ENCODE measurements at regions of chr5 and their contacts with region 1.

Region 1: DNA sequence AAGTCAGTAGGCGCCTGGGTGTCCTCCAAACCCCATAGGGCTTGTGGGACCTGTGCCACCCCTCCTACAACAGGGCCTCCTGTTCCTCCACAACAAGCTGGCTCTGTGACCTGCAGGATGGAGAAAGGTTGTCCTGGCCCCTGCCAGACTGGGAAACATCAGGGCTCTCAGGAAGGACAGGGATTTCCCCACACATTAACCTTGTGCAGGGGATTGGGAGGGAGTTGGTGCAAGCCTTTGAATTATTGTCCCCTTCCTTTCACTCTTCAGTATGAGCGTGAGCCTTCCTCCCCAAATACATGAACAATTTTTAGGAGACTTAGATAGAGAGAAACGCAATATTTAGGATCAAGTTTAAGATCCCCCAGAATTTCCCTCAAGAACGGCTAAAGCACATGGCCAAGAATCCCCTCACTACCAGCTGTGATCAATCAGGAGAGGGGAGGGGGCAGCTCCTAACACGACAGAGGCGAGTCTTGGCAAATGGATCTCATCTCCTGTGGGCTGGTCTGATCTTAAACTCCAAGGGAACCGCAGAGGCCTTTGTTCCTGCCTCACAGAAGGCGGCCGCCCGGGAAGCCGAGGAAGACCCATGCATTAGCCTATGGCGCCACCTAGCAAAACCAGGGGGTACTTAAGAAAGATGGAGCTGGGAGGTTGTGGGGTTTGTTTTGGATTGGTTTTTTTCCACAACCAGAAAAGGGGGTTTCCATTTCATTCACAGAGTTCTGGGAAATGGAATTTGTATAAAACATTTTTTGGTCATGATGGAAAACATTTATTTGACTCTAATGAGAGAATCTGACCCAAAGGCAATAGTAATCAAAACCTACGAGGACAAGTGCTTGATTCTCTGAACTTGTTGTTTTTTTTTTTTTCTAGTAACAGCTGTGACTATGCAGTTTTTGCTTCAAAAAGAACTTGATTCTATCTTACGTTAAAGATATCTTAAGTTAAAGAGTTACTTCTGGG is 36.1 kb upstream of the OSMR start:
- DNase-seq: peak; percentile 79 to 93 (median 87)
- H3K4me3 ChIP-seq: no peak overlapping the region
- H3K27ac ChIP-seq: peak overlapping the region in 3 of 5 donors; percentile 43 to 63 (median 54)
- H3K4me1 ChIP-seq: peaks cover 4 to 37% of the 10 kb centered on the region in 2 donors
- H3K27me3 ChIP-seq: no peaks in the 10 kb centered on the region
- CTCF ChIP-seq: peak; percentile 69 to 93 (median 86)
- POLR2A ChIP-seq: no peak

Region 2: DNA sequence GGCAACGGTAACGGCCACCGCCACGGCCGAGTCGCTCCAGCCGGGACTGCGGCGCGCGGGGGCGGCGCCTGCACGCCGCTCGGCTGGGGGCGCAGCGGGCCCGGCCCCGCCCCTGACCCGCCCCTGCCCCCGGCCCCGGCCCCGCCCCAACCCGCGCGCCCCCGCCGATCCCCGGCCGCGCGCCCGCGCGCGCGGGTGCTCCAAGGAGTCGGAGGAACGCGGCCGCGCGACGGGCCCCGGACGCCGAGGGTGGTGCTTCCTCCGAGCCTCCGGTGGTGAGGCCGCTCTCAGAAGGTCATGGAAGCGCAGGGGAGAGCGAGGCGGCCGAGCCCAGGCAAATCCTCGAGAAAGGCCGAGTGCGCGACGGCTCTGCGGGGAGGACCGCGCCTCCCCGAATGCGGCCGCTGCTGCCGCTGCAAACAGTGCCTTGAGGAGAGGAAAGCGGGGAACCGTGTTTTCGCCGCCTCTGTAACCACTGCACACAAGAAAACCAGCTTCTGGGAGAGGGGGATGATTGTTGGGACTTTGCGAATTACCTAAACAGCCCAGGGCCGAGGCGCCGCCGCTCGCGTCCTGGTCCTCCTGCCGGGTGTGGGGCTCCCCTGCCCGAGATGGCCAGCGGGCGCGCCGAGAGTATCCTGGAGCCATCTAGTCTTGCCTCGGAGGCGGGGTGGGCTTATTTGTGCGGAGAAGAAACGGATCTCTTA is 252.9 kb before region 1 on chr5 and contains the start of gene LIFR:
- intact Hi-C with region 1: loop called in 1 of 2 experiments (anchors 10 kb)
- DNase-seq: peak; percentile 85 to 90 (median 86)
- H3K4me3 ChIP-seq: peak within 1 kb of the TSS; percentile 16 to 97 (median 76)
- H3K27ac ChIP-seq: peak within 1 kb of the TSS; percentile 18 to 98 (median 92)
- H3K4me1 ChIP-seq: peaks cover 7 to 15% of the 10 kb centered on the region in 2 donors
- H3K27me3 ChIP-seq: no peaks in the 10 kb centered on the region
- CTCF ChIP-seq: peak in 1 of 6 experiments; percentile 7
- POLR2A ChIP-seq: peak; percentile 23 to 75
- total RNA-seq, gene LIFR: 28.7 to 118 (median 67.5) TPM

Region 3: DNA sequence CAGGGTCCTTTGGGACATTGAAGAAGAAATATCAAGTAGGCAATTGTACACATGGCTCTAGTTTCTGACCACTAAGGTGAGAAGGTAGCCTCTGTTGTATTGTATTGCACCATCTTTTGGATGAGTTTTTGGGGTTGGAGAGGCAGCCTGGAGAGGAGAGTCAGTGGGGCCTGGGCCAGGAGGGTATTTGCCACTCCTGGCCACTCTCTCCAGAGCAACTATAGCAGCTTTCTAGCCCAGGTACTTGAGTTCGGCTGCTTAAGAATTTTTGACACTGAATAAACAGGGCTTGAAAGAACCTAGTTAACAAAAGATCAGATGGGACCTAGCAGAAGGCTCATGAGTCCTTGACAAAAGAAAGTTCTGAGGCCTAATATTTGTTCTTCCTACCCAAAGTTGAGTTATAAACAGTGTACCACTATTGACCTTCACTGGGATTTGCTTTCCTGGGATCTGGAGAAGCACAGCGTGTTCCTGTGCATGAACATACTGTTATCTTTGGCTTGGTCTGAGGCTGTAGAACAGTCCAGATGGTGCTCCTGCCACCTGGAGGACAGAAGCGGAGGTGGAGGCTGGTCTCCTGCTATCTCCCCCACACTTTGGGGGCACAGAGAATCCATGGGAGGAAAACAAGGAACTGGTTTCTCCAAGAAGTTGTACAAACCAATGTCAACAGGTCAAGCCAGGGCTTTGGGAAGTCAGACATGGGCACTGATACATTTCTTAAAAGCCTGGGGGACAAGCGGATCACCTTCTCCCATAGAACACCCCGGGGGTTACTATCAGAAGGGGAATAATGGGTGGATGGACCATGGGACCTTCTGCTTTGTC is 142.8 kb before region 1 on chr5:
- intact Hi-C with region 1: loop called in 1 of 2 experiments (anchors 10 kb)
- DNase-seq: peak; percentile 20 to 74 (median 32)
- H3K4me3 ChIP-seq: no peak overlapping the region
- H3K27ac ChIP-seq: peak overlapping the region in 1 of 5 donors; percentile 55
- H3K4me1 ChIP-seq: peaks cover 4 to 13% of the 10 kb centered on the region in 2 donors
- H3K27me3 ChIP-seq: no peaks in the 10 kb centered on the region
- CTCF ChIP-seq: peak; percentile 25 to 69 (median 44)
- POLR2A ChIP-seq: no peak

Region 4: GRCh38 chr5:38938424-38938823 is 128.8 kb after region 1 on chr5:
- intact Hi-C with region 1: no loop called
- DNase-seq: no peak
- H3K4me3 ChIP-seq: no peak overlapping the region
- H3K27ac ChIP-seq: no peak overlapping the region
- H3K4me1 ChIP-seq: no peaks in the 10 kb centered on the region
- H3K27me3 ChIP-seq: no peaks in the 10 kb centered on the region
- CTCF ChIP-seq: no peak
- POLR2A ChIP-seq: no peak